ENCODE measurements at regions of chr18 and their contacts with region 1.

Region 1: GRCh38 chr18:58529714-58530354 is 99.1 kb downstream of the ALPK2 start:
- DNase-seq: peak; percentile 71 to 78 (median 71)
- H3K4me3 ChIP-seq: no peak overlapping the region
- H3K27ac ChIP-seq: no peak overlapping the region
- H3K4me1 ChIP-seq: peaks cover 0 to 5% (median 3%) of the 10 kb centered on the region in 4 experiments
- H3K27me3 ChIP-seq: peaks cover 0 to 7% (median 0%) of the 10 kb centered on the region in 5 experiments

Region 2: GRCh38 chr18:58541145-58541788 is 11.4 kb after region 1 on chr18:
- CTCF ChIA-PET with region 1: interaction called, 19 read pairs
- POLR2A ChIA-PET with region 1: interaction called, 3 read pairs
- DNase-seq: peak; percentile 34 to 47 (median 44)
- H3K4me3 ChIP-seq: no peak overlapping the region
- H3K27ac ChIP-seq: peak overlapping the region in 1 of 2 experiments; percentile 31
- H3K4me1 ChIP-seq: peaks cover 5 to 45% (median 19%) of the 10 kb centered on the region in 4 experiments
- H3K27me3 ChIP-seq: no peaks in the 10 kb centered on the region

Region 3: DNA sequence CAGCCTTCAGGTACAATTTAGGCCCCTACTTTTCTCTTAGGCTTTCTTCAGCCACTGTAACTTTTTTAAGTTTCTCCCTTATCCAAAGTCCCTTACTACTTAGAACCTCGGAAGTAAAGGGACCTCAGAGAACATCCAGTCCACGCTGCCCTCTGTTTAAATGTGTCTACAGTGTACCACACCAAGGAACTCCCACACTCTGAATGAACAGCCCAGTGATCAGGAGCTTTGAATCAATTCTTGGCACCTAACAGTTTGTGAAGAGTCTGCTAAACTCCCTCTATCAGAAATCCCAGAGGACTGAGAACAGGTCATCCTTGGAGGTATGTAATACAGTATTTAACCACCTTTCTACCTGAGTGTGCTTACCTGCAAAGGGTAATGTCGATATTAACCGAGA is 129.9 kb after region 1 on chr18:
- CTCF ChIA-PET with region 1: interaction called, 12 read pairs
- POLR2A ChIA-PET with region 1: no interaction called
- DNase-seq: no peak
- H3K4me3 ChIP-seq: no peak overlapping the region
- H3K27ac ChIP-seq: no peak overlapping the region
- H3K4me1 ChIP-seq: peaks cover 6 to 21% (median 13%) of the 10 kb centered on the region in 4 experiments
- H3K27me3 ChIP-seq: no peaks in the 10 kb centered on the region

Region 4: GRCh38 chr18:58671111-58671631 is 141.3 kb after region 1 on chr18 and contains the start of gene MALT1:
- CTCF ChIA-PET with region 1: interaction called, 13 read pairs
- POLR2A ChIA-PET with region 1: no interaction called
- DNase-seq: peak; percentile 90 to 95 (median 94)
- H3K4me3 ChIP-seq: peak within 1 kb of the TSS; percentile 69 to 88 (median 74)
- H3K27ac ChIP-seq: peak within 1 kb of the TSS; percentile 50 to 70
- H3K4me1 ChIP-seq: peaks cover 10 to 33% (median 12%) of the 10 kb centered on the region in 4 experiments
- H3K27me3 ChIP-seq: no peaks in the 10 kb centered on the region

Region 5: DNA sequence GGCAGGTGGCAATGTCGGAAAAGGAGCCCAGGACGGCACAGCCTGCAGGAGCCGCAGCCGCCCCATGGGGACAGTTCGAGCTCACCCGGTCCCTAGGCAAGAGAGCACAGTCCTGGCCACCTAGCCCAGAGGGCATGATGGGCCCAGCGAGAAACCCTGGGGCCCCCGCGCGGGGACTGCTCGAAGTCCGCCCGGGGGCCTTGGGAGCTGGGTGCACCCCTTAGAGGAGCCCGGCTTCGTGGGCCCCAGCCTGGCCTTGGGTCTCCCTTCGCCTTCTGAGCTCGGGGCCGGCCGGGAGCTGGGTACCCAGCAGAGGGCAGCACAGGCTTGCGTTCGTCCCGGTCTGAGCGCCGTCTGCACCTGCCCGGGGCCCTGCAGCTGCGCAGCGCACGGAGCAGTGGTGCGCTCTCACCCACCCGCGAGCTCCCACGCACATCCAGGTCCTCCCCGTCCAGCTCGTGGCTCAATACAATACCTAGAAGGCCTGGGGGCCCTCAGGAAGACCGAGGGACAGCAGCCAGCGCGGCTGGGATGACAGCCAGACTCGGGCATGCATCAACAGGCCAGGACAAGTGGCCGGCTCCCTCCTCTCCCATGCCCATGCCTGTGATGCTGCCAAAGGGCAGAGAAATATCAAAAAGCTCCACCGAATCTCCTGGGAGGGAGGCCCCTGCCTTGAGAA is 238.6 kb after region 1 on chr18:
- CTCF ChIA-PET with region 1: interaction called, 308 read pairs
- POLR2A ChIA-PET with region 1: interaction called, 4 read pairs
- DNase-seq: peak; percentile 60 to 79 (median 77)
- H3K4me3 ChIP-seq: peak overlapping the region in 4 of 7 experiments; percentile 19 to 67 (median 44)
- H3K27ac ChIP-seq: no peak overlapping the region
- H3K4me1 ChIP-seq: peaks cover 0 to 18% (median 6%) of the 10 kb centered on the region in 4 experiments
- H3K27me3 ChIP-seq: peaks cover 3 to 18% (median 8%) of the 10 kb centered on the region in 5 experiments

Measured in common myeloid progenitor, CD34-positive (primary cell).